ENCODE measurements at regions of chr1 and their contacts with region 1.

Region 1: DNA sequence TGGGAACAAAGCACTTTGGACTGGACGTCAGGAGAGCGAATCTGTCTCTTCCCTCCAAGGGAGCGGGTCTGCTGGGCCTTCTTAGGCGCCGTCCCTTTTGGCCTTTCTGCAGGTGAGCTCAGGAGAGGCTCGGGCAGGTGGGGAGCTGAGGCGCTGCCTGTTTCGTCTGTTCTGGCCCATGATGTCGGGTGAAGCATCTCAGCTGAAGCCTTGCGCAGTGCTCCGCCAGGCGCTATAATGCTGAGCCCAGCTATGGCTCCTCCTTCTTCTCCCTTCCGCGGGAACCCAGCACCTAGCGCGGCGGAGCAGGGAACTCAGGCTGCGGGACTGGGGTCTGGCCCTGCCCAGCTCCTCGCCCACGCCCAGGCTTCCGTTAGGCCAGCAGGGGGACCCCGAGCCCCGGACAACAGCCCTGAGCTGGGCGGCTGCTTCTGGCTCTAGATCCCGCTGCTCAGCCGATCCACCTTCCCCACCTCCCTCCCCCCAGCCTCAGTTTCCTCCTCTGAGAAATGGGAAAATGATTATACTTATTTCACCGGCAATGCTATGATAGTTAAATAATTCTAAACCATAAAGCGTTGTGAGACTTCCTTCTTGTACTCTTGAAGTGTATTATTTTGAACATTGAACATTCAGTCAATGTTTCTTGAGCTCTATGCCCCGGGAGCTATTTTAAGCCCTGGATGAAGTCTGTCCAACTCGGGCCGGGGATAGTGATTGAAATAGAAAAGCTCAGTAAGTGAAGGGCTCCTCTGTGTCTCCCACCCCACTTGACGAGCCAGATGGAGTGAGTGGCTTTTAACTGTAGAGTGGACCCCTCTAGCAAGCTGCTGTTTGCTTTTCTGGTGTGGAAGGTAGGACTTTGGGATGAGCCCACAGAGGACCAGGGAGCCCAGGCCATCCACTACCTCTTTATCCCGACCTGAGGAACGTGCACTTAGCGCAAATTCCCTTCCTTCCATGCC is 9.6 kb upstream of the ADORA1 start:
- DNase-seq: peak; percentile 80 to 87
- H3K4me3 ChIP-seq: no peak overlapping the region
- H3K4me3 Mint-ChIP-seq: no peak overlapping the region
- H3K27ac Mint-ChIP-seq: no peak overlapping the region
- H3K4me1 ChIP-seq: no peaks in the 10 kb centered on the region
- H3K4me1 Mint-ChIP-seq: no peaks in the 10 kb centered on the region
- H3K27me3 ChIP-seq: no peaks in the 10 kb centered on the region
- H3K27me3 Mint-ChIP-seq: no peaks in the 10 kb centered on the region
- CTCF ChIP-seq: peak; percentile 89 to 93

Region 2: DNA sequence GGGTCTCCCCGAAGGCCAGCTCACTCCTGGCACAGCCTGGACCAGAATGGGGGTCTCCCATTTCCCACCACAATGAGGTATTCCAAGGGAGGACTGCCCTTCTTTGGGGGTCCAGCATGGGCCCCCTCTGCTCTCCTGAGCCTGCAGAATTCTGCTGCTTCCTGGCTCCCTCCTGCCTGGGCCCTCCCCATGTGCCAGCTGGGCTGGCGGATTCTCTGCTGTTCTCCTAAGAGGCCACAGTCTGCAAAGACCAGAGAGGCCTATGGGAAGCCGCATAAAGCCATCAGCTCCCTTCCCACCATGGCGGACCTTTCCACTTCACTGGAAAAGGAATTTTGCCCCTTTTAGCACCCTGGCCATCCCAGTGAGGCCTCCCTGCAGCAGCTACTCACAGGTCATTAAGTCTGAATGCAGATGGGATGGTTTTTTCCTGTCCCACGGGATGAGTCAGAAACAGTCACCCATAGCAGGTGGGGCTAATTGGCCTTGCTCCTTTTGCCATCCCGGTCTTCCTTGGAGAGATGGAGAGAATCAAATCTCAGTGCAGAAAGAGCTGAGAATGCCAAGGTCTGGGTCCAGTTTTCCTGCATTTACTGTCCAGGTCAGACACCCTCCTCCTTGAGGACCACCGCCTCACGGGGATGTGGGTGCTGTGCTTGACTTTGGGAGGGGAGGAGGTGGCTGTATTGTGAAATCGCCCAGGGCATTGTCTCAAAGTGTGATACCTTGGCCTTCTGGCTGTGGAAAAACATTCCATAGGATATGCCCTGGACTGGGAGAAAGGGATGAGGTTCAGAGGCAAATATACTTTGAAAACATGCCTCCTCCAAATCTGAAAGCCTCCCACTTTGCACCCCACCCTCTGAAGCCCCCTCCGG is 34.5 kb after region 1 on chr1:
- CTCF ChIA-PET with region 1: no interaction called
- POLR2A ChIA-PET with region 1: no interaction called
- intact Hi-C with region 1: no loop called
- DNase-seq: no peak
- H3K4me3 ChIP-seq: no peak overlapping the region
- H3K4me3 Mint-ChIP-seq: no peak overlapping the region
- H3K27ac Mint-ChIP-seq: no peak overlapping the region
- H3K4me1 ChIP-seq: peaks cover 25% of the 10 kb centered on the region
- H3K4me1 Mint-ChIP-seq: peaks cover 32% of the 10 kb centered on the region
- H3K27me3 ChIP-seq: no peaks in the 10 kb centered on the region
- H3K27me3 Mint-ChIP-seq: no peaks in the 10 kb centered on the region
- CTCF ChIP-seq: no peak

Region 3: DNA sequence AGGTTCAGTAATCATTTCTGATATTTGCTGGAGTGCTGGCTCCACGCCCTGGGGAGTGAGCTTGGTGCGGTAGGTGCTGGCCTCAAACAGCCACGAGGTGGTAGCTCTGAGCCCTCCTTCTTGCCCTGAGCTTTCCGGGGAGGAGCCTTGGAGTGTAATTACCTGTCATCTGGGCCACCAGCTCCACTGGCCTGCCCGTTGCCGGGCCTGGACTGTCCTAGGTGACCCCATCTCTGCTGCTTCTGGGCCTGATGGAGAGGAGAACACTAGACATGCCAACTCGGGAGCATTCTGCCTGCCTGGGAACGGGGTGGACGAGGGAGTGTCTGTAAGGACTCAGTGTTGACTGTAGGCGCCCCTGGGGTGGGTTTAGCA is 48.7 kb after region 1 on chr1:
- CTCF ChIA-PET with region 1: interaction called, 10 read pairs
- POLR2A ChIA-PET with region 1: no interaction called
- intact Hi-C with region 1: no loop called
- DNase-seq: peak in 1 of 2 experiments; percentile 40
- H3K4me3 ChIP-seq: no peak overlapping the region
- H3K4me3 Mint-ChIP-seq: no peak overlapping the region
- H3K27ac Mint-ChIP-seq: peak overlapping the region; percentile 46
- H3K4me1 ChIP-seq: peaks cover 57% of the 10 kb centered on the region
- H3K4me1 Mint-ChIP-seq: peaks cover 43% of the 10 kb centered on the region
- H3K27me3 ChIP-seq: no peaks in the 10 kb centered on the region
- H3K27me3 Mint-ChIP-seq: no peaks in the 10 kb centered on the region
- CTCF ChIP-seq: peak in 1 of 2 experiments; percentile 51

Region 4: GRCh38 chr1:203172128-203173010 is 54.5 kb after region 1 on chr1:
- CTCF ChIA-PET with region 1: interaction called, 12 read pairs
- POLR2A ChIA-PET with region 1: no interaction called
- intact Hi-C with region 1: no loop called
- DNase-seq: peak; percentile 63 to 80
- H3K4me3 ChIP-seq: no peak overlapping the region
- H3K4me3 Mint-ChIP-seq: no peak overlapping the region
- H3K27ac Mint-ChIP-seq: peak overlapping the region; percentile 69
- H3K4me1 ChIP-seq: peaks cover 70% of the 10 kb centered on the region
- H3K4me1 Mint-ChIP-seq: peaks cover 65% of the 10 kb centered on the region
- H3K27me3 ChIP-seq: no peaks in the 10 kb centered on the region
- H3K27me3 Mint-ChIP-seq: no peaks in the 10 kb centered on the region
- CTCF ChIP-seq: peak; percentile 81 to 82

Region 5: DNA sequence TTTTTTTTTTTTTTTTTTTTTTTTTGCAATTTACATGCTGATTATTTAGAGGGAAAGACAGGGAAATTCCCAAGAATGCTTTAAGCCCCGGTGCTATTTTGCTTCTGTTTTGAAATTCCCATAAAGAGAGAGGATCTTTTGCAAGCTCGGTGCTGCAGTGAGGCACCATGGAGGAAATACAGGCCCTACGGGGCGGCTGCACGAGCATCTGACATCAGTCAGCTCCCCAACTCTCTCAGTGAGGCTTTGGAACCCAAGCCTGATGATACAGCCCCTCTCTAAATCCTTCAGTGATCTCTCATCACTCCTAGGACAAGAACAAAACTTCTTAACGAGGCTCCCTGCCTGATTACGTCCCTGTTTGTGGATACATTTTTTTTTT is 69.4 kb after region 1 on chr1:
- CTCF ChIA-PET with region 1: interaction called, 10 read pairs
- POLR2A ChIA-PET with region 1: no interaction called
- intact Hi-C with region 1: no loop called
- DNase-seq: no peak
- H3K4me3 ChIP-seq: no peak overlapping the region
- H3K4me3 Mint-ChIP-seq: peak overlapping the region; percentile 76
- H3K27ac Mint-ChIP-seq: peak overlapping the region; percentile 86
- H3K4me1 ChIP-seq: peaks cover 68% of the 10 kb centered on the region
- H3K4me1 Mint-ChIP-seq: peaks cover 62% of the 10 kb centered on the region
- H3K27me3 ChIP-seq: no peaks in the 10 kb centered on the region
- H3K27me3 Mint-ChIP-seq: no peaks in the 10 kb centered on the region
- CTCF ChIP-seq: no peak

Region 6: DNA sequence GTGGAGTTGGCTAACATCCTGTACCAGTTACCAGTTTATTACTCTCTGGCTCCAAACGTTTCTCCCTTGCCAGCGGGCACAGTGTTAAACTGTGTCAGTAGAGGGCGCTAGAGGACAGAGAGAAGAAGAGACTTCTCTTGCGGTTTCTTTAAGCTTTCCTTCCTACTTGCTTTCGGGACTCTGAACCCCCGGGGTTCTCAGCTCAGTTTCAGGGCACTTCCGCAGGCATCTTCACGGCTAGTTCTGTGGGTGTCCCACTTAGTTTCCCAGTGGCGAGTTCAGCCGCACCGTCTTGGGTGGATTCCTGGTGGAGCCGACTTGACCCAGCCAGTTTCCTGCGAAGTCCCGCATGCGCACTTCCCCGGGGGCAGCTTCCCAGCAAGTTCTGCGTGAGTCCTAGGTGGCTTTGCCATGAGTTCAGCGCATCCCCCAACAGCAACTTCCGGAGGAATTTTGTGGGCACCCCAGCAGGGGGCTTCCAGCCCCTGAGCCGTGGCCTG is 149.5 kb after region 1 on chr1:
- CTCF ChIA-PET with region 1: interaction called, 43 read pairs
- POLR2A ChIA-PET with region 1: no interaction called
- intact Hi-C with region 1: loop called (anchors 2 kb)
- DNase-seq: peak; percentile 73 to 78
- H3K4me3 ChIP-seq: no peak overlapping the region
- H3K4me3 Mint-ChIP-seq: no peak overlapping the region
- H3K27ac Mint-ChIP-seq: no peak overlapping the region
- H3K4me1 ChIP-seq: peaks cover 6% of the 10 kb centered on the region; the same call in 1 of the 2 replicates
- H3K4me1 Mint-ChIP-seq: peaks cover 12% of the 10 kb centered on the region
- H3K27me3 ChIP-seq: no peaks in the 10 kb centered on the region
- H3K27me3 Mint-ChIP-seq: no peaks in the 10 kb centered on the region
- CTCF ChIP-seq: peak; percentile 80 to 83